ENCODE measurements at regions of chr14 and their contacts with region 1.

Region 1: DNA sequence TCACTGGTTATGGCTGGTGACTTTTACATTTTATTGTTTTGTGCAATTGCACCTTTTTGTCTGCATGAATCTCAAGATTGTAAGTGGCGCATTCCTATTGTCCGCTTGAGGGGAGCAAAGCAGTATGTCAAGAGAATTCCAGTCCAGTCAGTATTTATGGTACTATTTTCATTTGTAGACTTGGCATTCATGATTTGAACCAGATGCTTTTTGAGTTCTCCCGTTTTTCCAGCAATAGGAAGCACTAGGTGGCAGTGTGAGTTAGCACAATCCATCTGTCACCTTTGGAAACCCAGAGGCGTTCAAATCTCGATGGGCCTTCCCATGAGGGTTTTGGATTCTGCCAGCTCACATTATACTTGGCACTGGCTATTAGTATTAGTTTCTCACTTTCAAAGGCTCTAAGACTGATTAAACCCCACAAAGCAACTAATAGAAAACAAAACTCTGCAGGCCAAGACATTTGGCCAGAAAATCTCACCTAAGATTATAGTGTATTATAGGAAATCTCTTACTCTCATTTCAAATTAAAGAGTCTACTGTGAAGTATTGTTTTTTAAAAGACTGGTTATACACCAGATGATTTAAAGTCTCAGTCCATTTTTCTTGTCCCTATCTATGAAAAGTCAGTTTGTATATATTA is 2.2 kb downstream of the DACT1 start:
- DNase-seq: peak in 4 of 5 donors; percentile 63 to 94 (median 82)
- H3K4me3 ChIP-seq: peak overlapping the region; percentile 52 to 65 (median 57)
- H3K27ac ChIP-seq: no peak overlapping the region
- H3K4me1 ChIP-seq: peaks cover 3 to 10% (median 10%) of the 10 kb centered on the region in 3 donors
- H3K27me3 ChIP-seq: no peaks in the 10 kb centered on the region
- CTCF ChIP-seq: peak; percentile 72

Region 2: DNA sequence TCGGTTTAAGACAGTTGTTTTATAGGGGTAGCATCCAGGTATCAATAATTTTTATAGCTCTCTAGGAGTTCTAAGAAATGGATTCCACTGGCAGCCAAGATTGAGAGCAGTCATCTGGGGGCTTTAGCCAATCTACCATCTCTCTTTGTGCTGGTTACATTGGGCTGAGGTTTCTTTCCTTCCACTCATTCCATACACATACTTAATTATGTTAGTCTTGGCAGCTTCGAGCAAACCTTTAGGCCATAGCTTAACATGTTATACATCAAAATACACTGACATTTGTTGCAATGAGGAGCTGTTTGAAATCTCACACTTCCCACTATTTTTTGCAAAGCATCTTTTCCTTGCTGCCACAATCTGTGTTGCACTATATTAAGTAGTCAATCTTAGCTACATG is 551.0 kb before region 1 on chr14:
- intact Hi-C with region 1: no loop called
- DNase-seq: no peak
- H3K4me3 ChIP-seq: no peak overlapping the region
- H3K27ac ChIP-seq: no peak overlapping the region
- H3K4me1 ChIP-seq: no peaks in the 10 kb centered on the region
- H3K27me3 ChIP-seq: no peaks in the 10 kb centered on the region
- CTCF ChIP-seq: no peak

Region 3: DNA sequence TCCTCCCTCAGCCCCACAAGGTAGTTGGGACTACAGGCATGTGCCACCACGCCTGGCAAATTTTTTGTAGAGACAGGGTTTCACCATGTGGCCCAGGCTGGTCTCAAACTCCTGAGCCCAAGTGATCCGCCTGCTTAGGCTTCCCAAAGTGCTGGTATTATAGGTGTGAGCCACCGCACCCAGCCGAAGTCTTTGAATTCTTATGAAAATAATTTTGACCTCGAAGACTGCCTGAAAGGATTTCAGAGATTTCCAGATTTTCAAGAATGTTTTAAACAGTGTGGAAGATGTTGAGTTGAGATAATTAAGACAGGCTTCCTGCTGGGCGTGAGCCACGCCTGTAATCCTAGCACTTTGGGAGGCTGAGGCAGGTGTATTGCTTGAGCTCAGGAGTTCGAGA is 390.3 kb before region 1 on chr14:
- intact Hi-C with region 1: no loop called
- DNase-seq: no peak
- H3K4me3 ChIP-seq: no peak overlapping the region
- H3K27ac ChIP-seq: no peak overlapping the region
- H3K4me1 ChIP-seq: peaks cover 0 to 4% (median 2%) of the 10 kb centered on the region in 3 donors
- H3K27me3 ChIP-seq: no peaks in the 10 kb centered on the region
- CTCF ChIP-seq: no peak

Region 4: DNA sequence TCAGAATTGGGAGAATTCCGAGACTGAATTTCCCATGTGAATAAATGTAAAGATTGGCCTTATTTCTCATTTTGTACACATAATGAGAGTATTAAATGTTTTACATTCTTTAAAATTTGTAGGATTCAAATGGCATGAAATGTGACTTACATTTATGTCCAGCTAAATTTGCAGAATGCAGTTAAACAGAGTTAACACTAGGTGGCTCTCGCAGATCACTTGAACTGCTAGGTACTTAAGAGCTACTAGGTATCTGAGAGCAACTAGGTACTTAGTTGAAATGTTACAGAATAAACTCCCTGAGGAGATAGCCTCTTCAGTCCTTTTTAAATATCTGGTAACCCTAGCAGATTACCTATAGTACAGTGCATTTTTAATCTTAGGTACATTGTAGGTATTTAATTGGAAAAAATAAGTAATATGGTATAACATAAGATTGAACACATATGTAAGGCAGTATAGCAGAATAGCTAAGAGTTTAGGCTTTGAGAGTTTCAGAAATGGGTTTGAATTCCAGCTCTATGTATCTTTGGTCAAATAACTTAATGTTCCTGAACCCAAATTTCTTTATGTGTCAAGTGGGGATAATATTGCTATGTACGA is 138.6 kb before region 1 on chr14:
- intact Hi-C with region 1: no loop called
- DNase-seq: peak in 3 of 5 donors; percentile 35 to 78 (median 74)
- H3K4me3 ChIP-seq: no peak overlapping the region
- H3K27ac ChIP-seq: no peak overlapping the region
- H3K4me1 ChIP-seq: no peaks in the 10 kb centered on the region
- H3K27me3 ChIP-seq: no peaks in the 10 kb centered on the region
- CTCF ChIP-seq: peak; percentile 77

Region 5: GRCh38 chr14:58705066-58705465 is 65.1 kb after region 1 on chr14:
- intact Hi-C with region 1: no loop called
- DNase-seq: no peak
- H3K4me3 ChIP-seq: no peak overlapping the region
- H3K27ac ChIP-seq: no peak overlapping the region
- H3K4me1 ChIP-seq: no peaks in the 10 kb centered on the region
- H3K27me3 ChIP-seq: no peaks in the 10 kb centered on the region
- CTCF ChIP-seq: no peak

Region 6: GRCh38 chr14:59032826-59033225 is 392.9 kb after region 1 on chr14:
- intact Hi-C with region 1: loop called (anchors 10 kb)
- DNase-seq: no peak
- H3K4me3 ChIP-seq: no peak overlapping the region
- H3K27ac ChIP-seq: no peak overlapping the region
- H3K4me1 ChIP-seq: peaks cover 0 to 2% (median 0%) of the 10 kb centered on the region in 3 donors
- H3K27me3 ChIP-seq: no peaks in the 10 kb centered on the region
- CTCF ChIP-seq: no peak

Measured in kidney (tissue), 22 donors.